Aorta (tissue), 5 donors: ENCODE measurements at regions of chr13 and their contacts with region 1.

Region 1: GRCh38 chr13:34156841-34157365 is 339.0 kb downstream of the RFC3 start:
- DNase-seq: peak; percentile 86 to 89
- ATAC-seq: peak; percentile 94
- H3K4me3 ChIP-seq: no peak overlapping the region
- H3K27ac ChIP-seq: peak overlapping the region; percentile 71 to 99
- H3K4me1 ChIP-seq: peaks cover 0 to 5% of the 10 kb centered on the region in 2 donors
- H3K27me3 ChIP-seq: no peaks in the 10 kb centered on the region

Region 2: DNA sequence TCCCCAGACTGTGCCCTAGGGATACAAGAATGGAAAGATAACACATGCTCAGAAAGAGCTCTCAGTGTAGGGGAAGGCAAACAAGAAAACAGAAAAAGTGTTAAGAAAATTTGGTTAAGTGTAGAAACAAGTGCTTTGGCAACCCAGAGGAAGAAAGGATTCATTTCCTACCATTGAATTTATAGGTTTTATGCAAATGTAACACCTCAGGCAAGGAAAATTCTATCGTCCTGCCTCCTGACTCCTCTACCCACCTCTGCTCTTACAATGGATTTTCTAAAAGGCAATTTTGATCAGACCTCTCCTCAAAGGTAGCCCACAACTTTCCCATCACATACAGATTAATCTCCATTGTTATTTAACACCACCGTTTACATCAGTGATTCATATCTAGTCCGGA is 40.3 kb before region 1 on chr13:
- intact Hi-C with region 1: loop called in 1 of 2 experiments (anchors 5 kb)
- DNase-seq: no peak
- ATAC-seq: no peak
- H3K4me3 ChIP-seq: no peak overlapping the region
- H3K27ac ChIP-seq: no peak overlapping the region
- H3K4me1 ChIP-seq: no peaks in the 10 kb centered on the region
- H3K27me3 ChIP-seq: no peaks in the 10 kb centered on the region

Region 3: GRCh38 chr13:34128613-34129012 is 28.3 kb before region 1 on chr13:
- intact Hi-C with region 1: loop called in 1 of 2 experiments (anchors 2 kb)
- DNase-seq: no peak
- ATAC-seq: no peak
- H3K4me3 ChIP-seq: no peak overlapping the region
- H3K27ac ChIP-seq: peak overlapping the region in 1 of 2 donors; percentile 38
- H3K4me1 ChIP-seq: peaks cover 0 to 6% of the 10 kb centered on the region in 2 donors
- H3K27me3 ChIP-seq: no peaks in the 10 kb centered on the region

Region 4: GRCh38 chr13:34879851-34880250 is 722.9 kb after region 1 on chr13:
- intact Hi-C with region 1: no loop called
- DNase-seq: no peak
- ATAC-seq: no peak
- H3K4me3 ChIP-seq: no peak overlapping the region
- H3K27ac ChIP-seq: no peak overlapping the region
- H3K4me1 ChIP-seq: no peaks in the 10 kb centered on the region
- H3K27me3 ChIP-seq: no peaks in the 10 kb centered on the region